ENCODE measurements at regions of chr3 and their contacts with region 1.

Region 1: DNA sequence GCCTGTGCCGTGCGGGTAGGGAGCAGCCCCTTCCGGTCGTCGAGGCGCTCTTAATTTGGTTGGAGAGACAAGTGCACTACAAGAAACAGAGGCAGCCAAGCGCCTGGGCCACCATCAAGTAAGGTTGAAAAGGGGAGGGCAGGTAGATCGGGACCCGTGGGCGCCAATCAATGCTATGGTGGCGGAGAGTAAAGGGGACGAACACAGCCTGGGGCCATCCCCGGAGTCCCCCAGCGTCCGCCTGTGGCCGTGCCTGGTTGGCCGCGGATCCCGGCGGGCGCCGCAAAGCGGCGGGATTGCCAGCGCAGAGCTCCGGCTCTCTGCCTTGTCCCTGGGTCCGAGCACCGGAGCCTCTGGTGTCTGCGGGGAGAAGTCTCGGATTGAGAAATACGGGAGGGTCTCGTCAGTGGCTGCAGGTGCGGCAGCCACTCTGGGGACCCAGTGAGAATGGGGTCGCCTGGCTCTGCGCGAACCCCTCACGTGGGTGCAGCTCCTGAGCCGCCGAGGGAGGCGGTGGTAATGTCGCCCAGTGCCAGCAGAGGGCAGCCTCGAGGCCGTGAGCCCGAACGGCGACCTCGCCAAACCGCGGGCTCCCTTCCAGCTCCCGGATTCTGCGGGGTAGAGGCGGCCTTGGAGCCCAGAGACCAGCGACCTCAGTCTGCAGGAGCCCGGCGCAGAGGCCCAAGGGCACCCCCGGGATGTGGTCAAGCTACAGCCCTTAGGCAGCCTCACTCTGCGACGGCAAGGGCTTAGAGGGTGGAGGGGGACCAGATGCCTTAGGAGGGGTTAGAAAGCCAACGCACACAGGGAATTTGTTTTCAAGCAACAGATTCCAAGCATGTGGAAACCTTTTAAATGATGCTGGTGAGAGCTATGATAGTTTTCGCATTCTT is 10.8 kb downstream of the FOXL2 start:
- DNase-seq: peak; percentile 54 to 72 (median 62)
- H3K4me3 ChIP-seq: peak overlapping the region; percentile 65
- H3K4me3 Mint-ChIP-seq: peak overlapping the region; percentile 67 to 80 (median 74)
- H3K27ac ChIP-seq: peak overlapping the region; percentile 7
- H3K27ac Mint-ChIP-seq: no peak overlapping the region
- H3K4me1 ChIP-seq: peaks cover 44% of the 10 kb centered on the region
- H3K4me1 Mint-ChIP-seq: peaks cover 34 to 44% (median 43%) of the 10 kb centered on the region in 3 donors
- H3K27me3 ChIP-seq: peaks cover 53% of the 10 kb centered on the region
- H3K27me3 Mint-ChIP-seq: peaks cover 71 to 84% of the 10 kb centered on the region in 2 donors

Region 2: GRCh38 chr3:138740072-138740471 is 196.0 kb before region 1 on chr3:
- CTCF ChIA-PET with region 1: no interaction called
- POLR2A ChIA-PET with region 1: no interaction called
- DNase-seq: no peak
- H3K4me3 ChIP-seq: no peak overlapping the region
- H3K4me3 Mint-ChIP-seq: no peak overlapping the region
- H3K27ac ChIP-seq: no peak overlapping the region
- H3K27ac Mint-ChIP-seq: no peak overlapping the region
- H3K4me1 ChIP-seq: no peaks in the 10 kb centered on the region
- H3K4me1 Mint-ChIP-seq: peaks cover 0 to 8% (median 5%) of the 10 kb centered on the region in 3 donors
- H3K27me3 ChIP-seq: no peaks in the 10 kb centered on the region
- H3K27me3 Mint-ChIP-seq: no peaks in the 10 kb centered on the region

Region 3: DNA sequence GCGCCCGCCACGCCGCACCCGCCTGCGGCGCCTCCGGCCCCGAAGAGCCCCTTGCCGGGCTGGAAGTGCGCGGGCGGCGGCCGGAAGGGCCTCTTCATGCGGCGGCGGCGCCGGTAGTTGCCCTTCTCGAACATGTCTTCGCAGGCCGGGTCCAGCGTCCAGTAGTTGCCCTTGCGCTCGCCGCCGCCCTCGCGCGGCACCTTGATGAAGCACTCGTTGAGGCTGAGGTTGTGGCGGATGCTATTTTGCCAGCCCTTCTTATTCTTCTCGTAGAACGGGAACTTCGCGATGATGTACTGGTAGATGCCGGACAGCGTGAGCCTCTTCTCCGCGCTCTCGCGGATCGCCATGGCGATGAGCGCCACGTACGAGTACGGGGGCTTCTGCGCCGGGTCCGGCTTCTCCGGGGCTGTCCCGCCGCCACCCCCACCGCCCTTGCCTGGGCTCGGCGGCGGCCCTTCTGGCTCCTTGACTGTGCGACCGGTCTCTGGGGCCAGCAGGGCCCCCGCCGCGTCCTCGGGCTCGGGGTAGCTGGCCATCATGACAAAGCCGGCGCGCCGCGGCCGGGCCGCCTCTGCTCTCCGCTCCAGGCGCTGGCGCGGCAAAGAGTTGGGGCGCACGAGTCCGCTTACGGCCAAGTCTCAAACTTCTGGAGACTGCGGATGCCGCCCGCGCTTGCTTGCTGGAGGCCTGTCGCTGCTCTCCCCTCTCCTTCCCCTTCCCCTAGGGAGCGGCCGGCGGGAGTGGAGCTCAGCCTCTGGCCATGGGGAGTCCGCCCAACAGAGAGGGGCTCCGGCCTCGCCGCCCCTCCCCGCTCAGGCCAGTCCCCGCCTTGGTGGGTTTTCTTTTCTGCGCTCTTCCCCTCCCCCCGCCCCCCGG is 10.3 kb after region 1 on chr3:
- CTCF ChIA-PET with region 1: interaction called, 22 read pairs
- POLR2A ChIA-PET with region 1: no interaction called
- DNase-seq: no peak
- H3K4me3 ChIP-seq: peak overlapping the region; percentile 19
- H3K4me3 Mint-ChIP-seq: peak overlapping the region; percentile 49 to 87 (median 70)
- H3K27ac ChIP-seq: peak overlapping the region; percentile 38
- H3K27ac Mint-ChIP-seq: no peak overlapping the region
- H3K4me1 ChIP-seq: peaks cover 20% of the 10 kb centered on the region
- H3K4me1 Mint-ChIP-seq: peaks cover 34 to 58% (median 47%) of the 10 kb centered on the region in 3 donors
- H3K27me3 ChIP-seq: peaks cover 75% of the 10 kb centered on the region
- H3K27me3 Mint-ChIP-seq: peaks cover 67 to 83% of the 10 kb centered on the region in 2 donors